H1 (cell line): ENCODE measurements at regions of chr16 and their contacts with region 1.

Region 1: GRCh38 chr16:49855280-49855821 is 561 bp downstream of the ZNF423 start:
- DNase-seq: peak; percentile 56 to 86
- H3K4me3 ChIP-seq: peak overlapping the region; percentile 52 to 85 (median 67)
- H3K27ac ChIP-seq: peak overlapping the region; percentile 46; the same call in 1 of the 2 replicates
- H3K4me1 ChIP-seq: peaks cover 13 to 31% (median 24%) of the 10 kb centered on the region in 4 experiments
- H3K27me3 ChIP-seq: peaks cover 0 to 28% (median 19%) of the 10 kb centered on the region in 4 experiments; a peak in 5 of 7 replicates
- CTCF ChIP-seq: no peak
- EP300 ChIP-seq: no peak
- POLR2A ChIP-seq: no peak; a peak in 1 of 3 replicates
- RAD21 ChIP-seq: 0 out of 4 replicates have a peak, but pooled peaks of 1 of the 2 experiments have one; percentile 1

Region 2: DNA sequence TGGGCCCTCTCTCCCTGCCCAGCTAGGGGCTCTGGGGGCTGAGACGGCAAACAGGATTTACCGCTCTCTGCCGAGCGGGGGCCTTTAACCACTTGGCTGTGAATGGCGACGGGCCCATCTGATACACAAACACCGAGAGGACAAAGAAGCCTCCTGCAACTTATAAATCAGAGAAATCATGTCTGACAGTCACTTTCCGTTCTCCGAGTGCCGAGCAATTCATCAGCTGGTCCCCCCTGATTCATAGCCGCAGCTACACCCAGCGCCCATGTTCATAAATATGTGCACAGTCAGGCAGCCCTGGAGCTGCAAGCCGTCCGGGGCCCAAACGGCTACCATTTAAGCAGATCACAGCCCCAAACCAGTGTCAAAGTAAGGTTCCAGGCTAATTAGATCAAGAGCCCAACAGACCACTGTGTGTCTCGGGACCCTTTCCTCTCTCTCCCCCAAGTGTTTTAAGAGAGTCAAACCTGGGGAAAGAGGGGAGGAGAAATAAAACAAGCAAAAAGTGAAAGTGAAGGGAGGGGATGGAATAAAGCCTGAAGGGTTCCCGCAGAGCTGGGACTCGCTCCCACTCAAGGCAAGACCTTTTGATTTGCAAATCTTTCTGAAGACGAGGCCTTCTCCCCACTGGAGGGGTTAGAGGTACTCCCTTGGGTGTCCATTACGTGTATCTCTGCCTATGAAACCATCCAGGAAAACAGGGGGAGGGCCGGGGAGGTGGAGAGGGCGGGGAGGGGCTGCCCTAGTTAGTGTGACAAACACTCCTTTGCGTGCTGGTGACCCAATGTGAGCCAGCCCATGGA is 327.1 kb before region 1 on chr16:
- CTCF ChIA-PET with region 1: no interaction called
- POLR2A ChIA-PET with region 1: no interaction called
- DNase-seq: no peak
- H3K4me3 ChIP-seq: no peak overlapping the region
- H3K27ac ChIP-seq: no peak overlapping the region; the same call in 1 of the 2 replicates
- H3K4me1 ChIP-seq: peaks cover 4 to 31% (median 16%) of the 10 kb centered on the region in 4 experiments
- H3K27me3 ChIP-seq: no peaks in the 10 kb centered on the region
- CTCF ChIP-seq: no peak
- EP300 ChIP-seq: no peak
- POLR2A ChIP-seq: no peak
- RAD21 ChIP-seq: no peak

Region 3: DNA sequence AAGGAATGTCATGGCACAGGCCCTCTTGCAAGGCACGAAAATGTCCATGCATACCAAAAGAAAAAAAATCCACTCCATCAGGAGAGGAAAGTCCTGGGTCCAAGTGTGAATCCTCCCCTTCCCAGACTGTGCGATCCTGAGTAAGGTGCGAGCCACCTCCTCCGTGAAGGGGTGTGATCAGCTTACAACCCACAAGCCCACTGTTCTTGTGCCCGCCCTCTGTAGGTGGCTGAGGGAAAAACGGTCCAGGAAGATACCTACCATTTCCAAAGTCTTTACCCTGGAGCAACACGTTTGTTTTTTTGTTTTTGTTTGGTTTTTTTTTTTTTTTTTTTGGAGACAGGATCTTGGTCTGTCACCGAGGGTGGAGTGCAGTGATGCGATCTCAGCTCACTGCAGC is 116.0 kb before region 1 on chr16:
- CTCF ChIA-PET with region 1: interaction called, 10 read pairs
- POLR2A ChIA-PET with region 1: no interaction called
- DNase-seq: peak in 1 of 2 experiments; percentile 67
- H3K4me3 ChIP-seq: no peak overlapping the region
- H3K27ac ChIP-seq: no peak overlapping the region
- H3K4me1 ChIP-seq: peaks cover 0 to 3% (median 2%) of the 10 kb centered on the region in 4 experiments; a peak in 4 of 7 replicates
- H3K27me3 ChIP-seq: no peaks in the 10 kb centered on the region
- CTCF ChIP-seq: peak; percentile 52 to 74 (median 61)
- EP300 ChIP-seq: no peak
- POLR2A ChIP-seq: no peak
- RAD21 ChIP-seq: peak; percentile 57 to 60

Region 4: DNA sequence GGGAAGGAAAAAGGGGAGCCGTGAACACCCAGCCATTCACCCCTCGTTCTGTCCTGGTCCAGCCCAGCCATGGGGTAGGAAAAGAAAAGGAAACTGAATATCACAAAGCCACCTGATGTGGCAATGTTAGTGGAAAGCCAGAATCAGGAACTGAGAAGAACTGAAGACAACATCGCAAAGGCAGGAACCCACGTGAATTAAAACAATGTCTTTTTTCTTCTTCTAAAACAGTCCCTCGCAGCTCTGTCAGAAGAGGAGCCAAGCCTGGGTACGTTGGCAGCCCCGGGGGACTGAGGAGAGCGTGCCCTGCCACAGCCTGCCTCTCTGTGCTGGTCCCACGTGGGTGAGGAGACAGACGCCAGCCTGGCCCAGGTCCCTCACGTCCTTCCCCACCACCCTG is 54.5 kb before region 1 on chr16:
- CTCF ChIA-PET with region 1: interaction called, 12 read pairs
- POLR2A ChIA-PET with region 1: no interaction called
- DNase-seq: no peak
- H3K4me3 ChIP-seq: no peak overlapping the region
- H3K27ac ChIP-seq: no peak overlapping the region
- H3K4me1 ChIP-seq: peaks cover 0 to 6% (median 2%) of the 10 kb centered on the region in 4 experiments; a peak in 6 of 7 replicates
- H3K27me3 ChIP-seq: no peaks in the 10 kb centered on the region
- CTCF ChIP-seq: no peak
- EP300 ChIP-seq: no peak
- POLR2A ChIP-seq: no peak
- RAD21 ChIP-seq: no peak

Region 5: GRCh38 chr16:49838441-49839016 is 16.8 kb before region 1 on chr16:
- CTCF ChIA-PET with region 1: interaction called, 13 read pairs
- POLR2A ChIA-PET with region 1: interaction called, 9 read pairs
- DNase-seq: no peak
- H3K4me3 ChIP-seq: peak overlapping the region; percentile 26 to 58 (median 33); a peak in 6 of 8 replicates
- H3K27ac ChIP-seq: no peak overlapping the region
- H3K4me1 ChIP-seq: peaks cover 10 to 66% (median 52%) of the 10 kb centered on the region in 4 experiments
- H3K27me3 ChIP-seq: no peaks in the 10 kb centered on the region
- CTCF ChIP-seq: no peak
- EP300 ChIP-seq: no peak
- POLR2A ChIP-seq: no peak
- RAD21 ChIP-seq: no peak

Region 6: DNA sequence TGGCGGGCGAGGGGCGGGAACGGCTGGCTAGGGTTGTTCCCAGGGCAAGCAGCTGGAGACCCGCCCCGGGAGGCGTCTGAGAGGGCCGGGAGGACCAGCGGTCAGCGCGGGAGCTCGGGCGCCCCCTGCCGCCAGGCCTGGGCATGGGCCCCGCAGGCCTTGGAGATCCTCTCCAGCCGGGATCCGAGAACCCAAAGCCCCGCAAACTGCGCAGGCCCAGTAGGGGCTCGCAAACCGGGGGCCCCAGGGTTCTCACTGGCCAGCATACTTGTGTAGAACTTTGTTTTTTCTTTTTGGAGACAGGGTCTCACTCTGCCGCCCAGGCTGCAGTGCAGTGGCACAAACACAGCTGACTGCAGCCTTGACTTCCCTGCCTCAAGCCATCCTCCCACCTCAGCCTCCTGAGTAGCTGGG is 21.4 kb after region 1 on chr16:
- CTCF ChIA-PET with region 1: interaction called, 126 read pairs
- POLR2A ChIA-PET with region 1: interaction called, 7 read pairs
- DNase-seq: peak; percentile 69 to 99
- H3K4me3 ChIP-seq: peak overlapping the region in 3 of 4 experiments; percentile 18 to 58 (median 45); a peak in 5 of 8 replicates
- H3K27ac ChIP-seq: no peak overlapping the region
- H3K4me1 ChIP-seq: peaks cover 0 to 8% (median 5%) of the 10 kb centered on the region in 4 experiments; a peak in 4 of 7 replicates
- H3K27me3 ChIP-seq: peaks cover 0 to 10% (median 4%) of the 10 kb centered on the region in 4 experiments; a peak in 3 of 7 replicates
- CTCF ChIP-seq: peak; percentile 83 to 89 (median 86)
- EP300 ChIP-seq: 0 out of 3 replicates have a peak, but pooled peaks of 1 of the 2 experiments have one; percentile 35
- POLR2A ChIP-seq: no peak
- RAD21 ChIP-seq: peak; percentile 50 to 67; a peak in 3 of 4 replicates

Region 7: GRCh38 chr16:49899991-49900695 is 44.8 kb after region 1 on chr16:
- CTCF ChIA-PET with region 1: interaction called, 11 read pairs
- POLR2A ChIA-PET with region 1: no interaction called
- DNase-seq: no peak
- H3K4me3 ChIP-seq: no peak overlapping the region
- H3K27ac ChIP-seq: no peak overlapping the region
- H3K4me1 ChIP-seq: no peaks in the 10 kb centered on the region
- H3K27me3 ChIP-seq: no peaks in the 10 kb centered on the region
- CTCF ChIP-seq: no peak
- EP300 ChIP-seq: no peak
- POLR2A ChIP-seq: no peak
- RAD21 ChIP-seq: no peak